ENCODE measurements at regions of chr10 and their contacts with region 1.

Region 1: DNA sequence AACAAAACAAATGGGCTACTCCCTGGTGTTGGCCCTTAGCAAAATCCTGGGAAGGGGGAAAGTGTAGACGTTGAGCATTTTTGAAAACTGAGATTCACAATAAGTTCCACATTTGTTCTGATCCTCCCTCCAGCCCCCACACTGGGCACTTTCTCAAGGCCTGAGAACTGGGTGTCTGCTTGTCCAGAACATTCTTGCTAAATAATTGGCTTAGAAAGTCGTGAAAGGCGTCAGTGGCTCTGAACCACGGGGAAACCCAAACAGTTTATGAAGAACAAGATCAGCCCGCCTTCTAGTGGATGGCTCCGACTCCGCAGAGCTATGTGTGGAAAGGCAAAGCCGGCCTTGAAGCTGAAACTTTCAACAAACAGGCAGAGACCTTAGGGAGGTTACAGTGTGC is 370.1 kb downstream of the PRPF18 start:
- DNase-seq: peak; percentile 80
- ATAC-seq: peak; percentile 90
- H3K4me3 ChIP-seq: no peak overlapping the region
- H3K27ac ChIP-seq: peak overlapping the region; percentile 28 to 51
- H3K4me1 ChIP-seq: no peaks in the 10 kb centered on the region
- H3K27me3 ChIP-seq: no peaks in the 10 kb centered on the region

Region 2: DNA sequence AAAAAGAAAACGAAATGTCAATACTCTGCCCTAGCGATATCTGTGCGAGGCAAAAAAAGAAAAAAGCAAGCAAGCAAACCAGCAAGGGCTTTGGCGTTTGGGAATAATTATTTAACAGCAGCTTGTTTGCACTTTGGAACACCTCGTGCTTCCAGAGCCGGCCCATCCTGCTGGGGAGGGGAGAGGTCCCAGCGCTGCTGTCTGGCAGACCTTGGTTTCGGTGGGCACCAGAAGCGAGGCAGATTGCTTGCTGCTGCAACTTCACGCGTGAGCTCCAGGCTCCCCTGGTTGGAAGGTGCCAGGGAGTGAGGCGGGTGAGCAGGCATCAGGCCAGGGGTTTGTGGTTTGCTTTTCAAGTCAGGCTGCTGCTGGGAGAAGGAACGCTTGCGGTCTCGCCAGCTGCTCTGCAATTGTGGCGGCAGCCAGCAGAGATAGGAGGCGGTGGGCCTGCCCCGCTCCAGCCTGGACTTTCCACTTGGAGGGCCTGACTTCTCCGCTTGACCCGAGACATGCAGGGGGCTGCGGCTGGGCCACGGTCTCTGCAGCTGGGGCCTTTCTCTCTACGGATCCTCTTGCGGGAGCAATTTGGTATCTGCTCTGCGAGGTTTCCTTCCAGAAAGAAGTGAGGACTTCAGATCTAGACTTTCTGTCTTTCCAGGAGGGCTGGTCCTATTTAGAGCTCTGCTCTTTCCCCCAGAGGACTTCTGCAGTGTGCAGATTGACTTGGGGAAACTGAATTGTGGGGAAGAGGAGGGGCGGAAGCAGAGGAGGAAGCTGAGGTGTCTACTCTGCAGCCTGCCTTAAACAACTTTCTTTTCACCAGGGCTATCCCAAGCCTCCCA is 238.7 kb before region 1 on chr10:
- intact Hi-C with region 1: no loop called
- DNase-seq: peak; percentile 90
- ATAC-seq: peak; percentile 82
- H3K4me3 ChIP-seq: no peak overlapping the region
- H3K27ac ChIP-seq: peak overlapping the region in 1 of 2 donors; percentile 83
- H3K4me1 ChIP-seq: no peaks in the 10 kb centered on the region
- H3K27me3 ChIP-seq: no peaks in the 10 kb centered on the region

Region 3: GRCh38 chr10:13787015-13787421 is 169.8 kb before region 1 on chr10:
- intact Hi-C with region 1: loop called (anchors 2 to 5 kb)
- DNase-seq: peak; percentile 51 to 76
- ATAC-seq: no peak
- H3K4me3 ChIP-seq: no peak overlapping the region
- H3K27ac ChIP-seq: no peak overlapping the region
- H3K4me1 ChIP-seq: no peaks in the 10 kb centered on the region
- H3K27me3 ChIP-seq: no peaks in the 10 kb centered on the region

Region 4: DNA sequence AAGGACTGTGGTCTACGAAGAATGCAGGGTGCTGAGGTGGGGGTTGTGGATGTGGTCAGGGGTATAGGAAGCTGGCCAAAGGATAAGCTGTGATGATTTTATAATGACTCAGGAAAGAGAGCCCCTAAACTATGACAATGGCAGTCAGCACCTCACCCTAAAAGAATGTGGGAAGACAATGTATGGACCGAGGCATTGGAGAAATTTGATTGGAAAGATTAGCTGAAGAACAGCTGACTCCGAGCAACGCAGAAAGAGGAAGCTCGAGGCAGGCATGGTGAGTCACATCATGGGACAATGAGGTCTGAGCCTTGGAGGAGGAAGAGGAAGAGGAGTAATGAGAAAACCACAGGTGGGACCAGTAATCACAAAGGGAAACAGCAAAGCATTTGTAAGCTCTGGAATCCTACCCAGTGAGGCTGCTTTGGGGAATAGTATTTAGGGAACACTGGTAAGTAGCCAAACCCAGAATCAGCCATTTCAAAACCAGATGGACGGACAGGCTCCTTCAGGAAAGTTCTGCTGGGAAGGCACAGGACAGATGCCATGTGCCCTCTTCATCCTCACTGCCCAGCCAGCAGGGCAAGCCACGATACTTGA is 74.6 kb before region 1 on chr10:
- intact Hi-C with region 1: loop called in 1 of 2 experiments (anchors 5 kb)
- DNase-seq: peak in 1 of 2 donors; percentile 74
- ATAC-seq: peak; percentile 36
- H3K4me3 ChIP-seq: no peak overlapping the region
- H3K27ac ChIP-seq: peak overlapping the region in 1 of 2 donors; percentile 37
- H3K4me1 ChIP-seq: peaks cover 0 to 4% of the 10 kb centered on the region in 2 donors
- H3K27me3 ChIP-seq: no peaks in the 10 kb centered on the region

Region 5: GRCh38 chr10:14123139-14123538 is 166.3 kb after region 1 on chr10:
- intact Hi-C with region 1: no loop called
- DNase-seq: no peak
- ATAC-seq: no peak
- H3K4me3 ChIP-seq: no peak overlapping the region
- H3K27ac ChIP-seq: no peak overlapping the region
- H3K4me1 ChIP-seq: no peaks in the 10 kb centered on the region
- H3K27me3 ChIP-seq: no peaks in the 10 kb centered on the region